ENCODE measurements at regions of chr14 and their contacts with region 1.

Region 1: GRCh38 chr14:56474419-56475022 is 105.1 kb upstream of the TMEM260 start:
- DNase-seq: no peak
- H3K4me3 Mint-ChIP-seq: no peak overlapping the region
- H3K27ac Mint-ChIP-seq: no peak overlapping the region
- H3K4me1 Mint-ChIP-seq: no peaks in the 10 kb centered on the region
- H3K27me3 Mint-ChIP-seq: peaks cover 2% of the 10 kb centered on the region

Region 2: GRCh38 chr14:55707365-55707804 is 767.1 kb before region 1 on chr14:
- CTCF ChIA-PET with region 1: interaction called, 14 read pairs
- POLR2A ChIA-PET with region 1: no interaction called
- intact Hi-C with region 1: no loop called
- DNase-seq: no peak
- H3K4me3 Mint-ChIP-seq: no peak overlapping the region
- H3K27ac Mint-ChIP-seq: no peak overlapping the region
- H3K4me1 Mint-ChIP-seq: no peaks in the 10 kb centered on the region
- H3K27me3 Mint-ChIP-seq: no peaks in the 10 kb centered on the region

Region 3: GRCh38 chr14:55731881-55732498 is 742.5 kb before region 1 on chr14:
- CTCF ChIA-PET with region 1: interaction called, 58 read pairs
- POLR2A ChIA-PET with region 1: no interaction called
- intact Hi-C with region 1: loop called (anchors 5 kb)
- DNase-seq: peak; percentile 59
- H3K4me3 Mint-ChIP-seq: no peak overlapping the region
- H3K27ac Mint-ChIP-seq: no peak overlapping the region
- H3K4me1 Mint-ChIP-seq: no peaks in the 10 kb centered on the region
- H3K27me3 Mint-ChIP-seq: no peaks in the 10 kb centered on the region

Region 4: GRCh38 chr14:55864890-55865655 is 609.4 kb before region 1 on chr14:
- CTCF ChIA-PET with region 1: no interaction called
- POLR2A ChIA-PET with region 1: no interaction called
- intact Hi-C with region 1: loop called (anchors 5 kb)
- DNase-seq: no peak
- H3K4me3 Mint-ChIP-seq: no peak overlapping the region
- H3K27ac Mint-ChIP-seq: no peak overlapping the region
- H3K4me1 Mint-ChIP-seq: no peaks in the 10 kb centered on the region
- H3K27me3 Mint-ChIP-seq: peaks cover 7% of the 10 kb centered on the region

Region 5: GRCh38 chr14:56374421-56374820 is 100.1 kb before region 1 on chr14:
- CTCF ChIA-PET with region 1: no interaction called
- POLR2A ChIA-PET with region 1: no interaction called
- intact Hi-C with region 1: no loop called
- DNase-seq: no peak
- H3K4me3 Mint-ChIP-seq: no peak overlapping the region
- H3K27ac Mint-ChIP-seq: no peak overlapping the region
- H3K4me1 Mint-ChIP-seq: no peaks in the 10 kb centered on the region
- H3K27me3 Mint-ChIP-seq: peaks cover 1% of the 10 kb centered on the region

Region 6: GRCh38 chr14:56461276-56462275 is 12.9 kb before region 1 on chr14:
- CTCF ChIA-PET with region 1: interaction called, 14 read pairs
- POLR2A ChIA-PET with region 1: no interaction called
- intact Hi-C with region 1: no loop called
- DNase-seq: no peak
- H3K4me3 Mint-ChIP-seq: no peak overlapping the region
- H3K27ac Mint-ChIP-seq: no peak overlapping the region
- H3K4me1 Mint-ChIP-seq: no peaks in the 10 kb centered on the region
- H3K27me3 Mint-ChIP-seq: peaks cover 21% of the 10 kb centered on the region

Measured in activated CD4-positive, alpha-beta memory T cell treated with anti-CD3 and anti-CD28 coated beads for 36 hours (primary cell).